Esophagus squamous epithelium (tissue), 5 donors: ENCODE measurements at regions of chr6 and their contacts with region 1.

Region 1: DNA sequence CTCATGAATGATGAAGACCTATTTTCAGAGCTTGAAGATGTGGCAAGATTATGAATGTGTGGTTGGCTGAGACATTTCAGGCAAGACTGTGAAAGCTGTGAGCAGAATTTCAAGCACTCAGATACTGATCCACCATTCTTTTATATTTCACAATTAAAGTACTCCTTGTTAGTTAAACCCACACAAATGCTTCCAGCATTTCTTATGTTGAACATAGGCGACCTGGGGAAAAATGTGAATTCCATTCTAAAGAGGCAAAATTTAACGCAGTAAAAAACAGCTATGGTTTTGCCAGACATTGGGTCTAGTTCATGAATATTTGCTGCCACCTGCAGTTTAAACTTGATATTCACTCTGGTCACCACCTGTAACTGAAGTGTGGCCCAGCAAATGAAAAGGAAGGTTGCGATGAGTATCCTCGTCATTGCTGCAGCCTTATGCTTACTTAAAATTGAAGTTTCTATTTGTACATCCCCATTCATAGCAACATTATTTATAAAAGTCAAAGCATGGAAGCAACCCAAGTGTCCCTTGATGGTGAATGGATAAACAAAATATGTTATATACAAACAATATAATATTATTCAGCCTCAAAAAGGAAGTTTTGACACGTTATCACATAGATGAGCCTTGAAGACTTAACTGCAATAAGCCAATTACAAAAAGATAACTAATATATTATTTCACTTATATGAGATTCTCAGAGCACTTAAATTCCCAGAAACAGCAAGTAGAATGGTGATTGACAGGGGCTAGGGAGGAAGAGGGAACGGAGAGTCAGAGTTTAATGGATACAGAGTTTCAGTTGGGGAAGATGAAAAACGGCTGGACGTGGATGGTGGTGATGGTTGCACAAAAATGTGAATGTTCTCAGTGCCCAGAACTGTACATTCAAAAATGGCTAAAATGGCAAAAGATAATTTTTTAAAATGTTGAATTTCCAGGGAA is 32.4 kb upstream of the FAM184A start:
- DNase-seq: no peak
- H3K4me3 ChIP-seq: no peak overlapping the region
- H3K27ac ChIP-seq: no peak overlapping the region
- H3K4me1 ChIP-seq: no peaks in the 10 kb centered on the region
- H3K27me3 ChIP-seq: peaks cover 0 to 4% (median 0%) of the 10 kb centered on the region in 4 donors
- CTCF ChIP-seq: peak; percentile 57 to 76 (median 62)
- POLR2A ChIP-seq: no peak

Region 2: DNA sequence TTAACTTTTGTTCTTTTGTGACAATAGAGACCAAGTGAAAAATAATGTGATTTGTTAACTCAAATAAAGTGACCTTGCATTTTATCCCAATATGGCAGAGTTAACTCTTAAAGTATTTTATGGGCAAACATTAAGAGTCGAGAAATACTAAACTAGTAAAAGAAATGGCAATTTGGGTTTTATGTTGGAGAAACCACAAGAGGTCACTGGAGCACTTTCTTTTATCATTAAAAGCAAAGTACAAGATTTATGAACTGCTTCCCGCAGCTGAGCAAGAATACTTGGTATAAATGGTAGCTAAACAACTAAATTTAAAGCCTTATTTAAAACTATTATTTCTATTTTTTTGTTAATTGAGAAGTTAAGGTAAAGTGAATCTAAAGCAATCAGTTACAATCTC is 142.5 kb before region 1 on chr6:
- intact Hi-C with region 1: loop called (anchors 5 kb)
- DNase-seq: no peak
- H3K4me3 ChIP-seq: no peak overlapping the region
- H3K27ac ChIP-seq: no peak overlapping the region
- H3K4me1 ChIP-seq: no peaks in the 10 kb centered on the region
- H3K27me3 ChIP-seq: no peaks in the 10 kb centered on the region
- CTCF ChIP-seq: peak in 4 of 6 experiments; percentile 15 to 52 (median 28)
- POLR2A ChIP-seq: no peak

Region 3: GRCh38 chr6:119267126-119267905 is 156.4 kb after region 1 on chr6:
- intact Hi-C with region 1: no loop called
- DNase-seq: no peak
- H3K4me3 ChIP-seq: no peak overlapping the region
- H3K27ac ChIP-seq: no peak overlapping the region
- H3K4me1 ChIP-seq: no peaks in the 10 kb centered on the region
- H3K27me3 ChIP-seq: no peaks in the 10 kb centered on the region
- CTCF ChIP-seq: no peak
- POLR2A ChIP-seq: no peak

Region 4: DNA sequence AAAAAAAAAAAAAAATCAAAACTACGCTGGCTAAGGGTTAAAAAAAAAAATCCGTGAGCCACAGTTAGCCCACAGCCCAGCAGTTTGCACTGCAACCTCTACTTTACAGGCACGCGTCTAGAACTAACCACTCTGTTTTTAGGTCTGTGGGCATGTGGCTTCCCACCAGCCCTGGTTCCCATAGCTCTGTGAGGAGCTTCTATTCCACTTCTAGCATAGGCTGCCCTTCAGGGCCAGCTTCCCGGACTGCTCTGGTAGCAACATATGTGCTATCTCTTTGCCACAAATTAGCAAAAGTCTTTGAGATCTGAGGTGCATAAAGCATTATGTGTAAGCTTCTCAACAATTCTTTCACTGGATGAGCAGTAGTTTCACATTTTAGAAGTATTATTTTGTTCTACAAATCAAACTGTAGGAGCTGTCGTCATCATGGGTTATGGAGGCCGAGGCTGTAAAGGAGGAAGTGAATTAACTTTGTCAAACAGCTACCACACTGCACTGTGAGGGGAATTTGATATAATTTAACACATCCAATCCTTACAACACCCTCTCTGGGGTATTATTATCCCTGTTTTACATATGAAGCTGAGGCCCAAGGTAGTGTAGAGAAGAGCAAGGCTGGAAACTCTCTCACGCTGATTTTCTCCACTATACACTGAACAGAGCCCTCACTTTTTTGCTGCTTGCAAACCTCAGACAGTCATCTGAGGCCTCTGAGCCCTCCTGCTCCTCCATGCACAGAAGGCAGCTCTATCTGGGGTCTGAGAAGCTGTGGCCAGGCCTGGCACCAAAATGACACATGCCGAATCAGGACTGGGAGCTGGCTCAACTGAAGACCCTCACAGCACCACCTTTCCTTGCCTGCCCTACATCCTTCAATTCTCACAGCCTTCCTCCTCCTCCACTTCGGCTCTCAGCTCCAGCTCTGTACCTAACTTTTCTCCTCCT is 203.3 kb after region 1 on chr6:
- intact Hi-C with region 1: no loop called
- DNase-seq: no peak
- H3K4me3 ChIP-seq: no peak overlapping the region
- H3K27ac ChIP-seq: peak overlapping the region in 3 of 4 donors; percentile 9 to 52 (median 51)
- H3K4me1 ChIP-seq: peaks cover 7 to 55% (median 13%) of the 10 kb centered on the region in 3 donors
- H3K27me3 ChIP-seq: no peaks in the 10 kb centered on the region
- CTCF ChIP-seq: no peak
- POLR2A ChIP-seq: no peak